Activated T-helper 1 cell treated with anti-CD3 and anti-CD28 coated beads, Interleukin-12 subunit alpha, Interleukin-12 subunit beta, Interleukin-2, Interleukin-4 antibody, amounts not matched to agents 30 ng/mL and 10 ng/mL and 1 ng/mL, durations not matched to agents 14 hours and 24 hours and 36 hours (primary cell): ENCODE measurements at regions of chr6 and their contacts with region 1.

Region 1: GRCh38 chr6:73675466-73676098 is 20.4 kb upstream of the CD109 start:
- DNase-seq: peak; percentile 57
- H3K4me3 Mint-ChIP-seq: no peak overlapping the region
- H3K27ac Mint-ChIP-seq: no peak overlapping the region
- H3K4me1 Mint-ChIP-seq: peaks cover 6% of the 10 kb centered on the region
- H3K27me3 Mint-ChIP-seq: peaks cover 16% of the 10 kb centered on the region

Region 2: GRCh38 chr6:73515204-73515655 is 160.4 kb before region 1 on chr6:
- intact Hi-C with region 1: no loop called
- DNase-seq: no peak
- H3K4me3 Mint-ChIP-seq: peak overlapping the region; percentile 88
- H3K27ac Mint-ChIP-seq: peak overlapping the region; percentile 82
- H3K4me1 Mint-ChIP-seq: peaks cover 34% of the 10 kb centered on the region
- H3K27me3 Mint-ChIP-seq: no peaks in the 10 kb centered on the region

Region 3: DNA sequence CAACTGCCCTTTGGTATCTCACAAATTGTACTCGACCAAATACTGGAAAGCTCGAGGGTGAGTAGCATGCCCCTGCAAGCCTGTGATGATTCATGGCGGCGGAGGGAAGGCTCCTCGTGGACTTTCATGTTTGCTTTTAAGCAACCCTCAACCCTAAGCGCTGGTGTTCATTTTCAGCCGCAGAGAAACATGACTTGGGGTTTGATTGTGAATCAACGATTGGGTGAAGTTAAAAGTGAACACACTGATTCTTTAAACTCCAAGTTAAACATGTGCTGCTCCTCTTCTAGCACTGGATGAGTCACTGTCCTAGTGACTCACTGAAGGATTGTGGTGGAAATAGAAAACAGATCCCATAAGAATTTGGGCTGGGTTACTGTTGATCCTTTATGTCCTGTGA is 28.7 kb after region 1 on chr6:
- intact Hi-C with region 1: no loop called
- DNase-seq: no peak
- H3K4me3 Mint-ChIP-seq: no peak overlapping the region
- H3K27ac Mint-ChIP-seq: peak overlapping the region; percentile 86
- H3K4me1 Mint-ChIP-seq: peaks cover 28% of the 10 kb centered on the region
- H3K27me3 Mint-ChIP-seq: no peaks in the 10 kb centered on the region

Region 4: GRCh38 chr6:73732845-73733675 is 57.5 kb after region 1 on chr6:
- intact Hi-C with region 1: loop called (anchors 1 kb)
- DNase-seq: peak; percentile 61
- H3K4me3 Mint-ChIP-seq: no peak overlapping the region
- H3K27ac Mint-ChIP-seq: peak overlapping the region; percentile 34
- H3K4me1 Mint-ChIP-seq: peaks cover 46% of the 10 kb centered on the region
- H3K27me3 Mint-ChIP-seq: no peaks in the 10 kb centered on the region